Body of pancreas (tissue), 4 donors: ENCODE measurements at regions of chr6 and their contacts with region 1.

Region 1: GRCh38 chr6:112311950-112312547 is 35.1 kb upstream of the RFPL4B start:
- DNase-seq: no peak
- ATAC-seq: no peak
- H3K4me3 ChIP-seq: no peak overlapping the region
- H3K27ac ChIP-seq: no peak overlapping the region
- H3K4me1 ChIP-seq: no peaks in the 10 kb centered on the region
- H3K27me3 ChIP-seq: no peaks in the 10 kb centered on the region
- CTCF ChIP-seq: peak; percentile 25 to 66 (median 60)
- POLR2A ChIP-seq: no peak

Region 2: GRCh38 chr6:112179631-112180030 is 132.4 kb before region 1 on chr6:
- intact Hi-C with region 1: loop called (anchors 5 kb)
- DNase-seq: no peak
- ATAC-seq: no peak
- H3K4me3 ChIP-seq: no peak overlapping the region
- H3K27ac ChIP-seq: no peak overlapping the region
- H3K4me1 ChIP-seq: no peaks in the 10 kb centered on the region
- H3K27me3 ChIP-seq: no peaks in the 10 kb centered on the region
- CTCF ChIP-seq: no peak
- POLR2A ChIP-seq: no peak

Region 3: DNA sequence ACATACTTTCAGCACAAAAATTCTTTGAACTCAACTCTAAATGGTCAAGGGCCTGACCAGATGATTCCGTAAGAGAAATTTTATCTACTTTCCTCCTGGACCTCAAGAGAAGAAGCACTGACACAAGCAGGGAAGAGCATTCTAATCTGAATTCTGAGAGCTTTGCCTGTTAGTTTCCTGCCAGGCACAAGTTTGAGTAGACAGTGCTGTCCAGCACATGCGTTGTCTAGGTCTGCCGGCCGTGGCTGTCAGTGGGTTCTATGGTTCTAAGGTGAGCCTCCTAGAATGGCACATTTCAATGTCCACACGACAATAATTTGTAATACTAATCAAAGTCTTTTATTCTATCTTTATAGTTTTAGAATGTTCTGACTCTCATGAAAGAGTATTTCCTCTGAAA is 127.0 kb after region 1 on chr6:
- intact Hi-C with region 1: no loop called
- DNase-seq: peak in 1 of 4 donors; percentile 36
- ATAC-seq: peak; percentile 34
- H3K4me3 ChIP-seq: no peak overlapping the region
- H3K27ac ChIP-seq: peak overlapping the region in 3 of 4 donors; percentile 7 to 54 (median 45)
- H3K4me1 ChIP-seq: peaks cover 36% of the 10 kb centered on the region
- H3K27me3 ChIP-seq: no peaks in the 10 kb centered on the region
- CTCF ChIP-seq: no peak
- POLR2A ChIP-seq: no peak